K562 (cell line): ENCODE measurements at regions of chr1 and their contacts with region 1.

Region 1: GRCh38 chr1:61950418-61950817 is 208.1 kb downstream of the PATJ start:
- DNase-seq: no peak
- ATAC-seq: peak; percentile 57; the same call in 1 of the 3 replicates
- H3K4me3 ChIP-seq: no peak overlapping the region
- H3K27ac ChIP-seq: no peak overlapping the region
- H3K4me1 ChIP-seq: no peaks in the 10 kb centered on the region
- H3K27me3 ChIP-seq: no peaks in the 10 kb centered on the region; a peak in 1 of 5 replicates
- CTCF ChIP-seq: peak in 2 of 3 experiments; percentile 11 to 63; a peak in 2 of 6 replicates
- EP300 ChIP-seq: no peak
- POLR2A ChIP-seq: no peak
- RAD21 ChIP-seq: peak; percentile 15 to 51; a peak in 2 of 4 replicates

Region 2: DNA sequence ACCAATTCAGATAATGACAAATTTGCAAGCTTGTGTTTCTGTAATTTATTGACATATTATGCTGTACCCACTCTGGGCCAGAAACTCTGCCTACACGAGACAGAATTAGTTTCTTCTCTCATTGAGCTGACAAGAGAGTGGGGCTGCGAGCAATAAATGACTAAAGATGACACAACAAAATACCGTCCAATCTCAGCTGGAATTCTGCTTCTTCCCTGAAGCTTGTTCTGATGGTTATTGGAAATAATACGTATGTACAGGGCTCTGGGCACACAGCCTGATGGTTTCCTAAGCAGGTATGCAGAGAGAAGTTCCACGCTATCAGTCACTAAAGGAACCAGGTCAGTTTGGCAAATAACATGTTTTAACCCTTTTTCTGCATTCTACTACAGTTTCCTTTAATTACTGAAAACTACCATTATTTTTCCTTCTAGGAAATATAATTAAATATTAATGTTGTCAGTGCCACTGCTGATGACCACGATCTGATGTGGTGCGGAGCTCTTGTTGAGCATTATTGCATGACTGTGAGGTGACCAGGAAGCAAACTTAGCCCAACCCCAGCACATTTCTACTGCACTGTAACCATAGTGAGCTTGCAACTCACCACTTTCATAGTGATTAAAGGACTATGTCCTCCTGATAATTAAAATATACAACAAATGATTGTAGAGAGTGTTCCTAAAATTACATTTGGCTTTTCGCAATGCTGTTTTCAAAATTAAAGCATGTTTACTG is 22.9 kb after region 1 on chr1:
- CTCF ChIA-PET with region 1: no interaction called
- POLR2A ChIA-PET with region 1: no interaction called
- in situ Hi-C with region 1: no loop called
- intact Hi-C with region 1: no loop called
- DNase-seq: no peak
- ATAC-seq: no peak
- H3K4me3 ChIP-seq: no peak overlapping the region
- H3K27ac ChIP-seq: no peak overlapping the region
- H3K4me1 ChIP-seq: no peaks in the 10 kb centered on the region
- H3K27me3 ChIP-seq: no peaks in the 10 kb centered on the region
- CTCF ChIP-seq: no peak
- EP300 ChIP-seq: no peak
- POLR2A ChIP-seq: no peak
- RAD21 ChIP-seq: no peak

Region 3: DNA sequence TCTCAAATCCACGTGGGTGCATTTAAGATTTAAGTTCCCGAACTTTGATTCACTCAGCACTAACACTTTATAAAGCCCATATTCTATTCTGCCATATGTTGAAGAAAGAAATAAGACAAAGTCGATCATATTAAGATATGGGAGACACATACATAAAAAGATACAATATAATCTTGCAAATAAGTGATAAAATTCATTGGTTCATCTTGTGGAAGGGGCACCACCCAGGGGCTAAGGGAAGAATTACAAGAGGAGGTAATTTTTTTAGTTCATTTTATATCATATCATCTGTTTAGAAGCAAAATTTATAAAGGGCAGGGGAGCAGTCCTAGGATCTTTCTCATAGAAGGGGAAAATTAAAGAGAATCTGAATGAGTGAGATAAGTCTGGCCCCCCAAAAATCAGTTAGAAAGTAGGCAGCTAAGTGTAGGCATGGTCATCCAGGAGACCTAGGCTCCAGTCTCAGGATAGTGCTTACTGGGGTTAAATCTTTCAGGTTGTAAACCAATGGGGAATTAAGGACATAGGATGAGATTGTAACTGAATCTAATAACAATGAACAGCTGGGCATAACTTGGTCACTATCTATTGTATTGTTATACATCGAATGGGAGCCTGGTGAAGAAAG is 120.1 kb after region 1 on chr1:
- CTCF ChIA-PET with region 1: no interaction called
- POLR2A ChIA-PET with region 1: no interaction called
- in situ Hi-C with region 1: no loop called
- intact Hi-C with region 1: loop called (anchors 1 kb)
- DNase-seq: peak; percentile 15 to 21 (median 18)
- ATAC-seq: no peak
- H3K4me3 ChIP-seq: no peak overlapping the region
- H3K27ac ChIP-seq: no peak overlapping the region
- H3K4me1 ChIP-seq: no peaks in the 10 kb centered on the region
- H3K27me3 ChIP-seq: no peaks in the 10 kb centered on the region
- CTCF ChIP-seq: peak in 2 of 3 experiments; percentile 52 to 58; a peak in 3 of 6 replicates
- EP300 ChIP-seq: no peak
- POLR2A ChIP-seq: no peak
- RAD21 ChIP-seq: peak in 1 of 2 experiments; percentile 53; a peak in 2 of 4 replicates

Region 4: DNA sequence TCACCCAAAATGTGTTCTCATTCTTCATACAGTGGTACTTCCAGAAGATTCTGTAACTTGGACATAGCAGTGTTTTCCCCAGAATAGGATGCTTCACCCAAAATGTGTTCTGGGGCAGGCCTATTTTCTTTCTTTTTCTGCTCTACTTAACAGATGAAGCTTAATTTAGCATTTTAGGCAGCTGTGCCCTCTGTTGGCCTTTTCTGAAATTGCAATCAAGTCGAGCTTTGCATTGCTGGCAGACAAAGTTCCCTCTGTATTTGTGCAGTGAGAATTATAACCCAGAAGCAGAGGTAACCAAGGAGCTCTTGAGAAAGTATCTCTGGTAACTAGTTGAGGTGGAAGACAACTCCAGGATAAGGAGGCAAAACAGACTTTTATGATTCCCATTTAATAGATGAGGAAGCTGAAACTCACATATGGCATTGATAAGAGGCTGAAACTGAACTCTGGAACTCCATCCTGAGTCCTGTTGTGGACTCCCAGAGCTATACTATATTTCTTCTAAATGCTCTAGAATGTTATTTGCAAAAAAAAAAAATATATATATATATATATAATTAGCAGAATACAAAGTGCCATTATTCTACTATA is 193.9 kb after region 1 on chr1:
- CTCF ChIA-PET with region 1: no interaction called
- POLR2A ChIA-PET with region 1: no interaction called
- in situ Hi-C with region 1: no loop called
- intact Hi-C with region 1: loop called (anchors 5 kb)
- DNase-seq: peak; percentile 16 to 52 (median 44)
- ATAC-seq: peak; percentile 56; the same call in 1 of the 3 replicates
- H3K4me3 ChIP-seq: no peak overlapping the region
- H3K27ac ChIP-seq: no peak overlapping the region
- H3K4me1 ChIP-seq: no peaks in the 10 kb centered on the region; a peak in 1 of 5 replicates
- H3K27me3 ChIP-seq: peaks cover 0 to 17% of the 10 kb centered on the region in 2 experiments; a peak in 4 of 5 replicates
- CTCF ChIP-seq: peak; percentile 46 to 67 (median 56)
- EP300 ChIP-seq: no peak
- POLR2A ChIP-seq: no peak
- RAD21 ChIP-seq: peak; percentile 40 to 65; a peak in 3 of 4 replicates